HepG2 (cell line): ENCODE measurements at regions of chr16 and their contacts with region 1.

Region 1: GRCh38 chr16:77971306-77972271 is 50.8 kb upstream of the CLEC3A start:
- DNase-seq: peak; percentile 67
- ATAC-seq: peak; percentile 91
- H3K4me3 ChIP-seq: no peak overlapping the region
- H3K27ac ChIP-seq: no peak overlapping the region
- H3K4me1 ChIP-seq: no peaks in the 10 kb centered on the region
- H3K27me3 ChIP-seq: peaks cover 0 to 7% of the 10 kb centered on the region in 2 experiments; a peak in 1 of 5 replicates
- CTCF ChIP-seq: peak; percentile 95
- EP300 ChIP-seq: no peak
- POLR2A ChIP-seq: no peak
- RAD21 ChIP-seq: peak; percentile 87

Region 2: GRCh38 chr16:77599793-77600415 is 371.7 kb before region 1 on chr16:
- CTCF ChIA-PET with region 1: interaction called, 10 read pairs
- POLR2A ChIA-PET with region 1: no interaction called
- in situ Hi-C with region 1: no loop called
- intact Hi-C with region 1: loop called (anchors 1 kb)
- DNase-seq: peak; percentile 41
- ATAC-seq: peak; percentile 91
- H3K4me3 ChIP-seq: no peak overlapping the region
- H3K27ac ChIP-seq: no peak overlapping the region
- H3K4me1 ChIP-seq: no peaks in the 10 kb centered on the region
- H3K27me3 ChIP-seq: no peaks in the 10 kb centered on the region
- CTCF ChIP-seq: peak; percentile 80
- EP300 ChIP-seq: no peak
- POLR2A ChIP-seq: no peak
- RAD21 ChIP-seq: no peak

Region 3: DNA sequence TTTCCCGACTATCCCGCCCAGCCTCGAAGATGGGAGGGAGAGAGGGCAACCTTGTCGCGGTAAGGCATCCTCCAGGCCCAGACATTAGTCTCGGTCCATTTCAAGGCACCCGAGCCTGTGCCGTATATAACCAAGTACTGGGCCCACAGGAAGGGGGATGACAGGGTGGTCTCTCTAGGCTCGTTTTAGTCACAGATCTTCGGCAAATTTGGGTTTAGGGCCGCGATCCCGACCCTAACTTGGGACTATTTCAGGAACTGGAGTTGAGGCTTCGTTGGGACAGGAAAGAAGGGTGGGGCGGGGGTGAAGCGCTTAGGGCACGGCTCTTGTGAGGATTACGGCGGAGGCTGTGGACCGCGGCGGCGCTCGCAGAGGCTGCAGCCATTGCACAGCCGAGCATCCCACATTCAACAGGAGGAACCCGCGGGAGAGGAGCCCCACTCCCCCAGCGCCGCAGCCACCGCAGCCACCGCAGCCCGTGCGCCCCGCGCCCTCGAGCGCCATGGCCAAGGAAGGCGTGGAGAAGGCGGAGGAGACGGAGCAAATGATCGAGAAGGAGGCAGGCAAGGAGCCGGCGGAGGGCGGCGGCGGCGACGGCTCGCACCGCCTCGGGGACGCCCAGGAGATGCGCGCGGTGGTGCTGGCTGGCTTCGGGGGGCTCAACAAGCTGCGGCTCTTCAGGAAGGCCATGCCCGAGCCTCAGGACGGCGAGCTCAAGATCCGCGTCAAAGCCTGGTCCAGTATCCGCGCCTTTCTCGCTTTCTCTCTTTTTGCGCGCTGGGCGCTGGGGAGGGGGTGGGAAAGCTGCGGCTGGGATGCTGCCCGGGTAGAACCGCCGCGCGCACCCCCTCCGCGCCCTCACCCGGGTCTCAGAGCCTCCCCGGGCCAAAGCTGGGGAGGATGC is 183.2 kb before region 1 on chr16 and contains the start of gene VAT1L:
- CTCF ChIA-PET with region 1: no interaction called
- POLR2A ChIA-PET with region 1: no interaction called
- in situ Hi-C with region 1: loop called (anchors 25 kb)
- intact Hi-C with region 1: no loop called
- DNase-seq: no peak
- ATAC-seq: peak; percentile 82
- H3K4me3 ChIP-seq: peak within 1 kb of the TSS in 1 of 3 experiments; percentile 34; a peak in 1 of 6 replicates
- H3K27ac ChIP-seq: no peak within 1 kb of the TSS
- H3K4me1 ChIP-seq: peaks cover 6% of the 10 kb centered on the region
- H3K27me3 ChIP-seq: peaks cover 4 to 48% of the 10 kb centered on the region in 2 experiments; a peak in 4 of 5 replicates
- CTCF ChIP-seq: peak; percentile 11; the same call in 1 of the 2 replicates
- EP300 ChIP-seq: no peak
- POLR2A ChIP-seq: no peak
- RAD21 ChIP-seq: no peak
- total RNA-seq, gene VAT1L: not detected in 2 replicates